Activated CD4-positive, alpha-beta T cell treated with anti-CD3 and anti-CD28 coated beads for 36 hours (primary cell): ENCODE measurements at regions of chr10 and their contacts with region 1.

Region 1: DNA sequence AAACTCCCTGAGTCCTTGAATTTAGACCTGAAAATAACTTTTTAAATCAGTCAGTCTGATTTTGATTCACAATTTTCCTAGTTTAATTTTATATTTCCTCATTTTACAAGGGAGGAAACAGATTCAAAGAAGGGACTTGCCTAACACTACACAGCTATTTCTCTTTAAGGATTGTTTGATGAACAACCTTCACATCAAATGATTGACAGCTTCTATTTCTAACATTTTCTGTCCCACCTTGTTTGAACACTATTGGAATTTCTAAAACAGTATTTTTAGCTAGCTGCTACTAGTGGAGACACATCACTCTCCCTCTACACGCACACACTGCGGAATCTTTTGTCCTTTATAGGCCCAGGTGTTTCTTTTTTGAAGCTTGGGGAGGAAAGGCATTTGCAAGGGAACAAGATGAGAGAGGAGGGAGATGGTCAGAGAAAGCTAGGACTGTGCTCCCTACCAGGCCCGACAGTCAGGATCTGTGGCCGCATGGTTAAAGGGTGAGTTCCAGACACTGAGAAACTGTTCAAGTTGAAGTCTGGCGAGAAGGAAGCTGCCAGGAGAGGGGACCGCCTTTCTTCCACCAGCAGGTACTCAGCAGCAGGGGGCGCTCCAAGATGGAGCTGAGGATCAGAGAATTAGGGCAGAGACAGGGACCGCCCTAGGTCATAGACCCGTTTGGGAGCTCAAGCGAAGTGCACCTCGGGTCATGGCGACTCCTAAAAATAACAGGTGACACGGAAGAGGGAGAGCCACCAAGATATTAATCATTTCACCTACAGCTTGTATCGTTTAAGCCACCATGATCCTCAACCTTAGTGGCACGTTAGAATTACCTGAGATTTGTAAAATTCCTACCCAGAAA is 49.7 kb downstream of the DNAJC12 start:
- DNase-seq: peak; percentile 92
- ATAC-seq: peak; percentile 79
- H3K4me3 Mint-ChIP-seq: no peak overlapping the region
- H3K27ac Mint-ChIP-seq: peak overlapping the region; percentile 66
- H3K4me1 Mint-ChIP-seq: peaks cover 35% of the 10 kb centered on the region
- H3K27me3 Mint-ChIP-seq: no peaks in the 10 kb centered on the region

Region 2: GRCh38 chr10:67803588-67804394 is 15.5 kb after region 1 on chr10:
- CTCF ChIA-PET with region 1: interaction called, 14 read pairs
- POLR2A ChIA-PET with region 1: no interaction called
- intact Hi-C with region 1: loop called (anchors 1 kb)
- DNase-seq: peak; percentile 49
- ATAC-seq: peak; percentile 95
- H3K4me3 Mint-ChIP-seq: no peak overlapping the region
- H3K27ac Mint-ChIP-seq: peak overlapping the region; percentile 74
- H3K4me1 Mint-ChIP-seq: peaks cover 8% of the 10 kb centered on the region
- H3K27me3 Mint-ChIP-seq: no peaks in the 10 kb centered on the region

Region 3: GRCh38 chr10:67837541-67838314 is 49.5 kb after region 1 on chr10 and contains the start of gene DNAJC12:
- CTCF ChIA-PET with region 1: interaction called, 11 read pairs
- POLR2A ChIA-PET with region 1: no interaction called
- intact Hi-C with region 1: no loop called
- DNase-seq: no peak
- ATAC-seq: peak; percentile 99
- H3K4me3 Mint-ChIP-seq: peak within 1 kb of the TSS; percentile 22
- H3K27ac Mint-ChIP-seq: no peak within 1 kb of the TSS
- H3K4me1 Mint-ChIP-seq: peaks cover 4% of the 10 kb centered on the region
- H3K27me3 Mint-ChIP-seq: no peaks in the 10 kb centered on the region
- total RNA-seq, gene DNAJC12: 6.6 to 7.0 TPM

Region 4: DNA sequence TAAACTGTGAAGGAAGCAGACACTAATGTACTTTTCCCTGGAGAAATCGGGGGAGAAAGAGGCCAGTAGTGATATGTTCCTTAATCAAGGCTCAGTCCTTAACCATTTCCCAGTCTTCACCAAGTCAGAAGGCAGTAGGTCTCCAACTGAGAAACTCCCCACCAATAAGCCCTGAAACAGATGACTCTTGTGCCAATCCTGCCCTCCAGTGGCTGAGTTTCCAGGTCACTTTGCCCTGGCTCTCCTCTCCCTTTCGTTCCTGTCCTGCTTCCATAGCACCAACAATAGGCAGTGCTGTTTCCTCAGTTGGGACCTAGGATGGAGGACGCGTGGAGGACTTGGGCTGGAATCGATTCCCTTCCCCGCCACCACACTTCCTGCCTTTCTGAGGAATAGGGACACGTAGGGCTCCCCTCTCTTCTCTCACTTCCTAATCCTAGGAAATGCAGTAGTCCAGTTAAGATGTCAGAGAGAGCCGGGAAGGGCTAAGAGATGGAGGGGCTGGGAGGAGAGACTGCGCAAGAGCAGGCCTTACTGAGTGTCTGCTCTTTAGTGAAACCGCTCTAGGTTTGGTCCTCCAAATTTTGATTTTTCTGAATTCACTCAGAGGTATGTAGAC is 420.3 kb after region 1 on chr10:
- CTCF ChIA-PET with region 1: interaction called, 5 read pairs
- POLR2A ChIA-PET with region 1: no interaction called
- intact Hi-C with region 1: loop called in 1 of 2 experiments (anchors 1 kb)
- DNase-seq: peak; percentile 53
- ATAC-seq: peak; percentile 49
- H3K4me3 Mint-ChIP-seq: no peak overlapping the region
- H3K27ac Mint-ChIP-seq: no peak overlapping the region
- H3K4me1 Mint-ChIP-seq: no peaks in the 10 kb centered on the region
- H3K27me3 Mint-ChIP-seq: peaks cover 9% of the 10 kb centered on the region